Breast epithelium (tissue), 4 donors: ENCODE measurements at regions of chrX and their contacts with region 1.

Region 1: DNA sequence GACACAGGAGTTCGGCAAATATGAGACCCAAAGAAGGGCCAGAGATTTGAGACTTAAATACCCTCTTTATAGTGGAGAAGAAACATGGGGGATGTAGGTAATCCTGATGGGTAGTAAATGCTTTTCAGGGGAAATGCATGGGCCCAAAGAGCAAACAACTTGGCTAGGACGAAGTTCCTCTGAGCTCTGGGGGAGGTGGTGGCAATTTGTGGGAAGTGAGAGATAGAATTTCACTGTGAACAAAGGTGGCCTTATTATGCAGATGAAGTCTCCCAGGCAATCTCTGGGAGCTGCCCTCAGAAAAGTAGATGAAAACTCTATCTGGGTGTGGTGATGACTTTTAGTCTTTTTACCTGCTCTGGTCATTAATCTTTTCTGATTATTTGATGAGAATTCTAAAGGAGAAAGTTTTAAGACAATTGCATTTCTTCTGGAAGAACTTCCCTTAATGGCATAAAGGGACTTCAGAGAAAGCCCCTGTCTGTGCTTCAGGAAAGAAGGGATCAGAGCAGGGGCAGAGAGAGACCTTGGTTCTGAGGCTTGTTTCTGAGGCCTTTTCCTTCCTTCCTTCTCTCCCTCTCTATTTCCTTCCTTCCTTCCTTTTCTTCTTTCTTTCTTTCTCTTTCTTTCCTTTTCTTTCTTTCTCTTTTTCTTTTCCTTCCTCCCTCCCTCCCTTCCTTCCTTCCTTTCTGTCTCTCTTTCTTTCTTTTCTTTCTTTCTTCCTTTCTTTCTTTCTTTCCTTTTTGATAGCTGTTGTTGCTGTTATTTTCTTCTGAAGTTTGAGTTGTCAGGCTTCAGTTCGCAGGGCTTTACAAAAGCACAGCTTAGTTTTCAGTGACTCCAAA is 37.5 kb upstream of the MAOA start:
- DNase-seq: no peak
- H3K4me3 ChIP-seq: no peak overlapping the region
- H3K27ac ChIP-seq: no peak overlapping the region
- H3K4me1 ChIP-seq: no peaks in the 10 kb centered on the region
- H3K27me3 ChIP-seq: peaks cover 0 to 16% of the 10 kb centered on the region in 2 donors
- CTCF ChIP-seq: no peak
- POLR2A ChIP-seq: no peak

Region 2: DNA sequence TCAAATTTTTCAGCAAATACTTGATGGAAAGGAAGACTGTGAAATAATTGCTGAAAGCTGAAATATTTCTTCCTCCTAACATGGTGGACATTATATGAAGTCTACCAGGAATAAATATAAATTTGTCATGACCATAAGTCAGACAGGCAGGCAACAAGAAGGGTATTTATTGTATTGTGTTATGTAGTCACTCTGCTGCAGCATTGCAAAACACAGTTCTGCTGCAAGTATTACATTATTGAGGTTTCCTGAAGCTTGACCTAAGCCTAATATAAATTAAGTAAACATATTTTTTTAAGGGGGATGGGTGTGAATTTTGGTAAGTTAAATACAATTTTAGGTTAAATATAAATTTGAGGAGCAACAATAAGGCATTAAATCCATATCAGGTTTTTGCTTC is 22.7 kb before region 1 on chrX:
- intact Hi-C with region 1: loop called (anchors 2 kb)
- DNase-seq: no peak
- H3K4me3 ChIP-seq: no peak overlapping the region
- H3K27ac ChIP-seq: no peak overlapping the region
- H3K4me1 ChIP-seq: no peaks in the 10 kb centered on the region
- H3K27me3 ChIP-seq: peaks cover 0 to 17% of the 10 kb centered on the region in 2 donors
- CTCF ChIP-seq: no peak
- POLR2A ChIP-seq: no peak

Region 3: GRCh38 chrX:43654431-43655150 is 36.0 kb after region 1 on chrX:
- intact Hi-C with region 1: no loop called
- DNase-seq: peak; percentile 87 to 92
- H3K4me3 ChIP-seq: peak overlapping the region; percentile 68 to 77 (median 70)
- H3K27ac ChIP-seq: peak overlapping the region; percentile 80 to 89
- H3K4me1 ChIP-seq: no peaks in the 10 kb centered on the region
- H3K27me3 ChIP-seq: peaks cover 0 to 12% of the 10 kb centered on the region in 2 donors
- CTCF ChIP-seq: peak in 2 of 3 donors; percentile 9
- POLR2A ChIP-seq: peak; percentile 71